ENCODE measurements at regions of chr1 and their contacts with region 1.

Region 1: GRCh38 chr1:145823565-145824498 is at the starts of genes POLR3C and RNF115:
- DNase-seq: peak; percentile 94 to 98
- ATAC-seq: peak; percentile 96
- H3K4me3 ChIP-seq: peak within 1 kb of the TSS; percentile 52 to 91
- H3K27ac ChIP-seq: peak within 1 kb of the TSS; percentile 69 to 75
- H3K4me1 ChIP-seq: no peaks in the 10 kb centered on the region
- H3K27me3 ChIP-seq: no peaks in the 10 kb centered on the region
- total RNA-seq, gene POLR3C: 23.8 to 25.9 TPM
- total RNA-seq, gene RNF115: 29.7 to 60.3 TPM

Region 2: GRCh38 chr1:145751491-145752037 is 72.3 kb before region 1 on chr1:
- intact Hi-C with region 1: loop called in 1 of 2 experiments (anchors 10 kb)
- DNase-seq: no peak
- ATAC-seq: no peak
- H3K4me3 ChIP-seq: no peak overlapping the region
- H3K27ac ChIP-seq: no peak overlapping the region
- H3K4me1 ChIP-seq: no peaks in the 10 kb centered on the region
- H3K27me3 ChIP-seq: no peaks in the 10 kb centered on the region

Region 3: DNA sequence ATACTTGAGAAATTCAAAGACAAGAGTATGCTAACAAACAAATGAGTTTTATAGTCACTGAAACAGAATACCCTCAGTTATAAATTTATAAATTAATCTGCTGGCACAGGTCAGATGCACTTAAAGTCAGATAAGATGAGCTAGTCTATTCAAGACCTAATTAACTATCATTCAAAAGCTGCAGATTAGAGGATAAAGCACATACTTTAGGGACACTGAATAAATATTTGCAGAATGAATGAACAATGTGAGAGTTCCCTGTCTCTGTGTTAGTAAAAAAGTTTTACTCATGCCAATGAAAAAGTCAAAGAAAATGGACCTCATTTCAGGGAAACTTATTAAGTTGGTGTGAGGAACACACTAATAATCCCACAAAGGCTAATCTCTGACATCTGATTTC is 58.3 kb before region 1 on chr1:
- intact Hi-C with region 1: no loop called
- DNase-seq: no peak
- ATAC-seq: no peak
- H3K4me3 ChIP-seq: no peak overlapping the region
- H3K27ac ChIP-seq: no peak overlapping the region
- H3K4me1 ChIP-seq: no peaks in the 10 kb centered on the region
- H3K27me3 ChIP-seq: no peaks in the 10 kb centered on the region

Region 4: DNA sequence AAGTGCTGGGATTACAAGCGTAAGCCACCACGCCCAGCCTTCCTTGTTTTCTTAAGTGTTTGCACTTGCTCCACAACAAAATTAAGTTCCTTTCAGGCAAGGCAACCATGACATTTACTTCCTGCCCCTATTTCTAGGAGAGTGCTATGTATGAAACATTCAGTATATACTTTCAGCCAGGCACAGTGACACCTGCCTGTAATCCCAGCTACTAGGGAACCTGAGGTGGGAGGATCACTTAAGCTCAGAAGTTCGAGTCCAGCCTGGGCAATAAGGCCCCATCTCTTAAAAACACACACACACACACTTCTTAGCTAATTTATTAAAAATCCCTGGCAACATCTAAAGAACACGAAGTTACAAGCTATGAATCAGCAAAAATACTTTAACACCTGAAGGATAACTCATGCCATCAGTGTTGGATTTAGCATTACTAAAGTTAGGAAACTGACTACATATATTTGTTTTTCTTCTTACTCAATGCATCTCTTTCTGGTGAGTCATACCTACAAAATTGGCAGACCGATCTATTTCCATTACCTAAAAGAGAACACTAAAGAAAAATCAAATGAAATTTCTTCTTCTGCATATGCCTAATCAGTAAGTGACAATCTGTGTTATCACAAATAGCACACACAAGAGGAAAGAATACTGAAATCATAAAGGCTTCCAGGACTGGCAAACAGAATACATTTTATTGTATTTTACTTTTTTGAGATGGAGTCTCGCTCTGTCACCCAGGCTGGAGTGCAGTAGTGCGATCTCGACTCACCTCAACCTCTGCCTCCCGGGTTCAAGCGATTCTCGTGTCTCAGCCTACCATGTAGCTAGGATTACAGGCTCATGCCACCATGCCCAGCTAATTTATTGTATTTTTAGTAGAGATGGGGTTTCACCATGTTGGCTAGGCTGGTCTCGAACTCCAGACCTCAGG is 41.4 kb before region 1 on chr1:
- intact Hi-C with region 1: loop called in 1 of 2 experiments (anchors 5 kb)
- DNase-seq: no peak
- ATAC-seq: peak; percentile 80
- H3K4me3 ChIP-seq: peak overlapping the region; percentile 52 to 86
- H3K27ac ChIP-seq: peak overlapping the region; percentile 93 to 99
- H3K4me1 ChIP-seq: peaks cover 0 to 6% of the 10 kb centered on the region in 2 donors
- H3K27me3 ChIP-seq: no peaks in the 10 kb centered on the region

Region 5: GRCh38 chr1:147156638-147157037 is 1332.8 kb after region 1 on chr1:
- intact Hi-C with region 1: no loop called
- DNase-seq: no peak
- ATAC-seq: no peak
- H3K4me3 ChIP-seq: no peak overlapping the region
- H3K27ac ChIP-seq: no peak overlapping the region
- H3K4me1 ChIP-seq: no peaks in the 10 kb centered on the region
- H3K27me3 ChIP-seq: no peaks in the 10 kb centered on the region

Measured in aorta (tissue), 5 donors.